ENCODE measurements at regions of chr20 and their contacts with region 1.

Region 1: GRCh38 chr20:18926965-18927364 is 113.4 kb downstream of the SCP2D1 start:
- DNase-seq: no peak
- ATAC-seq: no peak
- H3K4me3 ChIP-seq: no peak overlapping the region
- H3K27ac ChIP-seq: no peak overlapping the region
- H3K4me1 ChIP-seq: no peaks in the 10 kb centered on the region
- H3K27me3 ChIP-seq: no peaks in the 10 kb centered on the region
- CTCF ChIP-seq: no peak

Region 2: GRCh38 chr20:18851541-18852098 is 75.3 kb before region 1 on chr20:
- CTCF ChIA-PET with region 1: no interaction called
- POLR2A ChIA-PET with region 1: no interaction called
- in situ Hi-C with region 1: no loop called
- intact Hi-C with region 1: no loop called
- DNase-seq: no peak
- ATAC-seq: no peak
- H3K4me3 ChIP-seq: no peak overlapping the region
- H3K27ac ChIP-seq: no peak overlapping the region
- H3K4me1 ChIP-seq: no peaks in the 10 kb centered on the region
- H3K27me3 ChIP-seq: no peaks in the 10 kb centered on the region; the same call in 1 of the 2 replicates
- CTCF ChIP-seq: no peak

Region 3: DNA sequence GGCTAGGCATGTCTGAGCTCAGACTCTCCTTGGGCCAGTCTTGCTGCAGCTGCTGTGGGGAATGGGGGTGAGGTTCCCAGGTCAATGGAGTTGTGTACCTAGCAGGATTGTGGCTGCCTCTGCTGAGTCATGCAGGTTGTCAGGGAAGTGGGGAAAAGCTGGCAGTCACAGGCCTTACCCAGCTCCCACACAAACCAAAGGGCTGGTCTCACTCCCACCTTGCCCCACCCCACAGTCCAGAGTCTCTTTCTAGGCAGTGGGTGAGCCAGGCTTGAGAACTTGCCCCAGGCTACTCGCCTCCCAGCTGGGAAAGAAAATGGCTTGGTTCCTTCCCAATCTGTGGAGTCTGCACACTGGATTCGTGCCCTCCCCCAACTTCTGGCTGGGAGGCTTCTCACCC is 47.7 kb before region 1 on chr20:
- CTCF ChIA-PET with region 1: no interaction called
- POLR2A ChIA-PET with region 1: no interaction called
- in situ Hi-C with region 1: no loop called
- intact Hi-C with region 1: no loop called
- DNase-seq: no peak
- ATAC-seq: no peak
- H3K4me3 ChIP-seq: no peak overlapping the region
- H3K27ac ChIP-seq: no peak overlapping the region
- H3K4me1 ChIP-seq: no peaks in the 10 kb centered on the region
- H3K27me3 ChIP-seq: no peaks in the 10 kb centered on the region
- CTCF ChIP-seq: no peak

Region 4: GRCh38 chr20:18984238-18985200 is 57.6 kb after region 1 on chr20:
- CTCF ChIA-PET with region 1: no interaction called
- POLR2A ChIA-PET with region 1: no interaction called
- in situ Hi-C with region 1: no loop called
- intact Hi-C with region 1: loop called (anchors 10 kb)
- DNase-seq: no peak
- ATAC-seq: no peak
- H3K4me3 ChIP-seq: no peak overlapping the region
- H3K27ac ChIP-seq: no peak overlapping the region
- H3K4me1 ChIP-seq: no peaks in the 10 kb centered on the region
- H3K27me3 ChIP-seq: no peaks in the 10 kb centered on the region
- CTCF ChIP-seq: no peak

Measured in Panc1 (cell line).